Activated CD4-positive, alpha-beta memory T cell treated with anti-CD3 and anti-CD28 coated beads, Interleukin-2, amount 10 ng/mL, durations not matched to agents 7 days and 5 days (primary cell): ENCODE measurements at regions of chr3 and their contacts with region 1.

Region 1: DNA sequence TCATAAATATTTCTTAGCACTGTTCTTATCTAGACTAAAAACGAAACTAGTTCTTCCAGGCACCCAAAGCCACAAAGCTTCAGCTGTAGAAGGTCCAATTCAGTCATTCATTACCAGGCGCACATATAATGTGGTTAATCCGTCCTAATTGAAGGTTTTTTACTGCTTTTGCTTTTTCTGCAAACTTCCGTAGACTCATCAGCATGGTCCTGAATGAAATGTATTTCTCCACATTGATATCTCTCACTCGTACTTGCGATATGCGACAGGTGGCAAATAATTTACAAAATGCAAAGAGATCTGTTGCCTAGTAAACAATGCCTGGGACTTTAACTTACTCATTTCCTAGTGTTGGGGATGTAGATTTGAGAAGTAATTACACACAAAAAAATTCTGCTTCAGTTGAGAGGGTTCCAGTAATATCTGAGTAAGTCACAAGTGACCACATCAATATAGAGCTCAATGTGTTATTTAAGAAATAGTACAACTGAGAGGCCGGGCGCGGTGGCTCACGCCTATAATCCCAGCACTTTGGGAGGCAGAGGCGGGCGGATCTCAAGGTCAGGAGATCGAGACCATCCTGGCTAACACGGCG is 75.0 kb upstream of the MBNL1 start:
- DNase-seq: peak; percentile 48
- H3K4me3 Mint-ChIP-seq: peak overlapping the region; percentile 75
- H3K27ac Mint-ChIP-seq: peak overlapping the region; percentile 87
- H3K4me1 Mint-ChIP-seq: peaks cover 80% of the 10 kb centered on the region
- H3K27me3 Mint-ChIP-seq: no peaks in the 10 kb centered on the region

Region 2: GRCh38 chr3:152258448-152259393 is 65.0 kb after region 1 on chr3:
- CTCF ChIA-PET with region 1: interaction called, 4 read pairs
- POLR2A ChIA-PET with region 1: interaction called, 38 read pairs
- DNase-seq: peak; percentile 67
- H3K4me3 Mint-ChIP-seq: peak overlapping the region; percentile 62
- H3K27ac Mint-ChIP-seq: peak overlapping the region; percentile 91
- H3K4me1 Mint-ChIP-seq: peaks cover 78% of the 10 kb centered on the region
- H3K27me3 Mint-ChIP-seq: no peaks in the 10 kb centered on the region